HEK293 (cell line): ENCODE measurements at regions of chr6 and their contacts with region 1.

Region 1: GRCh38 chr6:133184798-133185372 is 56.3 kb upstream of the EYA4 start:
- H3K4me3 ChIP-seq: no peak overlapping the region
- H3K27ac ChIP-seq: no peak overlapping the region
- H3K4me1 ChIP-seq: peaks cover 36% of the 10 kb centered on the region
- CTCF ChIP-seq: peak; percentile 32; the same call in 1 of the 2 replicates

Region 2: DNA sequence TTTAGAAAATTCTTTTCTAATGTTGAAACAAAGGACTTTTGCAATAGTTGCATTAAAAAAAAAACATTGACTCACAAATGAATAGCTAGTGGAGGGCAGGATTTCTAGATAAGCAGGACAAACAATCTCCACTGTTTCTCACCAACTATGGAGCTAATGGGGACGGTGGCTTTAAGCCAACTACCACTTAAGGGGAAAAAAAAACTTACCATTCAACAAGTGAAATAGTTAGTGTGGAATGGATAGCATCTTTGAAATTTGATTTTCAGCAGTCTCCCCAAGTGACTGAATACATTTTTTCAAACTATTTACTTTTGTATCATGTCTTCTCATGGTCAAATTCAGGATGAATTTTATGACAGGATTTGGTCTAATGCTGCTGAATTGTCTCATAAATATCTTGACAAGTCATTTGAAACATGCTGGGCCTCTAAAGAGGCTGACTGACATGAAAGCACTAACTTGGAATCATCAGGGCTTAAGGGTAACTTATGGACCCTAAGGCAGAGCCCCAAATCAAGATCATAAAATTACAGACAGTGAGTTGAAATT is 156.8 kb after region 1 on chr6:
- CTCF ChIA-PET with region 1: no interaction called
- POLR2A ChIA-PET with region 1: no interaction called
- H3K4me3 ChIP-seq: no peak overlapping the region
- H3K27ac ChIP-seq: peak overlapping the region; percentile 84
- H3K4me1 ChIP-seq: peaks cover 67% of the 10 kb centered on the region
- CTCF ChIP-seq: no peak

Region 3: DNA sequence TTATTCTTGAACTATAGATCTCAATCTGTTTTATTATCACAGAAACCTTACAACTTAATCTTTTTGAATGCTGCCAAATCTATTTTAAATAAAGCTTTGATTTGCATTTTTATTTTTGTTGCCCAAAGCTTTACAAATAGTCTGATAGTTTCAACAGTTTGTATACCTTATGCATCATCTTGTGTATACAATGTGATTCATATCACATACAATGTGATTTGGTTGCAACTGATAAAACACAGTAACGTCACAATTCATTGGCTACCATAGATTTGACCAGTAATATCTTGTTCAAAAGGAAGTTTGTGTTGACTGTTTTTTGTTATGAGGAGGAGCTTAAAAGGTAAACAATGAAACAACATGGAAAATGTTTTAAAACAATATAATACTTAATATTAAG is 167.2 kb after region 1 on chr6:
- CTCF ChIA-PET with region 1: interaction called, 13 read pairs
- POLR2A ChIA-PET with region 1: no interaction called
- H3K4me3 ChIP-seq: no peak overlapping the region
- H3K27ac ChIP-seq: no peak overlapping the region
- H3K4me1 ChIP-seq: peaks cover 23% of the 10 kb centered on the region
- CTCF ChIP-seq: no peak

Region 4: GRCh38 chr6:133551847-133552341 is 367.0 kb after region 1 on chr6:
- CTCF ChIA-PET with region 1: interaction called, 69 read pairs
- POLR2A ChIA-PET with region 1: no interaction called
- H3K4me3 ChIP-seq: no peak overlapping the region
- H3K27ac ChIP-seq: no peak overlapping the region
- H3K4me1 ChIP-seq: no peaks in the 10 kb centered on the region
- CTCF ChIP-seq: no peak